ENCODE measurements at regions of chr3 and their contacts with region 1.

Region 1: DNA sequence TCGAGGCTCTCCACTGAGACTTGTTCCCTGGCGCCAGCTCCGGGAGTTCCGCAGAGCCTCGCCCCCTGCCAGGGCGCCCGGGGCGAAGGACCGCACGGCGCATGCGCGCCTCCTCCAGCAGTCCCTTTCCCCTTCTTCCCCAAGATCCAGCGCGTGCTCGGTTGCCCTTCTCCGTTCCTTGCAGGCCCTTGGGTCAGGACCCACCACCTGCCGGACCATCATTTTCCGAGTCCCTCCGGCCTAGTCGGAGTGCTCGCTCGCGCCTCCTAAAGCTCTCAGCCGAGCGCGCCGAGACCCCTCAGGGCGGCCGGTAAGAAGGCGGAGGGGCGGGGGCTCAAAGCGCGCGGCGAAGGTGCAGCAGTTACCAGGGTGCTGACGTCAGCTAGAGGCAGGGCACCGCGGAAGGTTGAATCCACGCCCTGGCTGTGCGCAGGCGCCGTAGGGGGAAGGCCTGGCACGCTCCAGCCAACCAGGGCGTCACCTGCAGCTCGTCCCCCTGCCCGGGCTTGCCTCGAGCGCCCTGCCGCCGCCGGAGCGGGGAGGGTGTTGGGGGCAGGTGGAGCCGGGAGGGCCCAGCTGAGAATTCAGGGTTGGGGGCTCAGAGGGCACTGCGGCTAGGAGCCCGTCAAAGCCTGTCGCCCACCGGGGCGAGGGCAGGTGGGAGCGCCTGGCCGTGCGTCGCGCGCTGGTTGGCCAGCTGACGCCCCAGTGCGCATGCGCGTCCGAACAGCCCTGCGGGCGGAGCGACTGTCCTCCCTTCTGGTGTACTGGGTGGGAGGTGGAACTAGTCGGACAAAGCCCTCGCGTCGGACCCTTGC is at the start of gene TCAIM:
- DNase-seq: peak; percentile 98
- H3K4me3 Mint-ChIP-seq: peak within 1 kb of the TSS; percentile 95
- H3K27ac Mint-ChIP-seq: peak within 1 kb of the TSS; percentile 92
- H3K4me1 Mint-ChIP-seq: peaks cover 24% of the 10 kb centered on the region
- H3K27me3 Mint-ChIP-seq: peaks cover 10% of the 10 kb centered on the region
- total RNA-seq, gene TCAIM: 19.3 to 19.4 TPM

Region 2: GRCh38 chr3:44439499-44440295 is 101.5 kb after region 1 on chr3:
- CTCF ChIA-PET with region 1: no interaction called
- POLR2A ChIA-PET with region 1: interaction called, 19 read pairs
- DNase-seq: peak; percentile 80
- H3K4me3 Mint-ChIP-seq: no peak overlapping the region
- H3K27ac Mint-ChIP-seq: peak overlapping the region; percentile 84
- H3K4me1 Mint-ChIP-seq: peaks cover 36% of the 10 kb centered on the region
- H3K27me3 Mint-ChIP-seq: no peaks in the 10 kb centered on the region

Region 3: DNA sequence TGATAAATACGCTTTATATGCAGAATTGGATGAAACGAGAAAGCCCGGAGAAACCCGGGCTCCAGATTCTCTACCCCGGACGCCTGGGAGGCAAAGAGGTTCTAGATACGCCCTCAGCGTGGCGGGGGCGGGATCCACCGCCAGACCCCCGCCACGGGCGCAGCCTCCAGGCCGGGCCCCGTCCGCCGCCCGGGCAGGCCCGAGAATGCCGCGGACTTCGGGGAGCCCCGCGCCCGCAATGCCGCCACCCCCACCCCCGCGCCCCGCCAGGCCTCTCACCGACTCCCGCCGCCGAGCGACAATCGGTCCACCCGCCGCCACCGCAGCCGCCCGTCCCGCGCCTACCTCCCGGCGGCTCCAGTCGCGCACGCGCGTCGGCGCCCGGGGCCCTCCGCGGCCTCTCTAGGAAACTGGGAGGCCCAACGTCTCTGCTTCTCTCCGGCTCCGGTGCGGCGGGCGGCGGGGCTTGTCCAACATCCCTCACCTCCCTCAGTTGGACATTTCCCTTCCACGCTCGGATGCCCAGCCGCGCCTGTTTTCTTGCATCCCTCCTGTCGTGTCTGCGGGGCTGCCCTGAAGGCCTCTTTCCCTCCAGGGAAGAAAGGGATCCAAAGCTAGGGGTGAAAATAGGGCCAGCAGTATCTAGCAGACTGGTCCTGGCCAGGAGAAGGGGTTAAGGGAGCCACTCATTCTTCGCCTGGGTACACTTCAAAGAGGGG is 139.3 kb after region 1 on chr3 and contains the start of gene ZNF445:
- CTCF ChIA-PET with region 1: no interaction called
- POLR2A ChIA-PET with region 1: interaction called, 19 read pairs
- DNase-seq: peak; percentile 80
- H3K4me3 Mint-ChIP-seq: peak within 1 kb of the TSS; percentile 90
- H3K27ac Mint-ChIP-seq: peak within 1 kb of the TSS; percentile 78
- H3K4me1 Mint-ChIP-seq: peaks cover 22% of the 10 kb centered on the region
- H3K27me3 Mint-ChIP-seq: no peaks in the 10 kb centered on the region
- total RNA-seq, gene ZNF445: 17.8 to 19.6 TPM

Region 4: DNA sequence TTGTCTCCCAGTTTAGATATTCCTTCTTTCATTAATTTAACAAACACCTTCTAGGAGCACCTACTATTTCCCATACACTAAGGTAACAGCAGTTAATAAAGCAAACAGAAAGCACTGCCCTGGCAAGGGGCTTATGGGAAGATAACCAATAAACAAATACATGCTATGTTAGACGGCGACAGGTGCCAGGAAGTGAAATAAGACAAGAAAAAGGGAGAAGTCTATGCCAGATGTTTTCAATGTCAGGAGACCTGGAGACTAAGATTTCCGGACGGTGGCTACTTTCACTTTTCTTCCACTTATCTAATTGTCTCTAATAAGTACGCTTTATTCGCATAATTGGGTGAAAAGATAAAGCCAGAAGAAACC is 171.8 kb after region 1 on chr3:
- CTCF ChIA-PET with region 1: interaction called, 4 read pairs
- POLR2A ChIA-PET with region 1: interaction called, 26 read pairs
- DNase-seq: no peak
- H3K4me3 Mint-ChIP-seq: peak overlapping the region; percentile 85
- H3K27ac Mint-ChIP-seq: peak overlapping the region; percentile 69
- H3K4me1 Mint-ChIP-seq: peaks cover 26% of the 10 kb centered on the region
- H3K27me3 Mint-ChIP-seq: no peaks in the 10 kb centered on the region

Region 5: GRCh38 chr3:44624749-44625480 is 286.7 kb after region 1 on chr3 and contains the start of gene ZNF197:
- CTCF ChIA-PET with region 1: interaction called, 3 read pairs
- POLR2A ChIA-PET with region 1: interaction called, 16 read pairs
- DNase-seq: peak; percentile 71
- H3K4me3 Mint-ChIP-seq: peak within 1 kb of the TSS; percentile 86
- H3K27ac Mint-ChIP-seq: peak within 1 kb of the TSS; percentile 81
- H3K4me1 Mint-ChIP-seq: peaks cover 19% of the 10 kb centered on the region
- H3K27me3 Mint-ChIP-seq: no peaks in the 10 kb centered on the region
- total RNA-seq, gene ZNF197: 13.4 to 14.0 TPM

Region 6: DNA sequence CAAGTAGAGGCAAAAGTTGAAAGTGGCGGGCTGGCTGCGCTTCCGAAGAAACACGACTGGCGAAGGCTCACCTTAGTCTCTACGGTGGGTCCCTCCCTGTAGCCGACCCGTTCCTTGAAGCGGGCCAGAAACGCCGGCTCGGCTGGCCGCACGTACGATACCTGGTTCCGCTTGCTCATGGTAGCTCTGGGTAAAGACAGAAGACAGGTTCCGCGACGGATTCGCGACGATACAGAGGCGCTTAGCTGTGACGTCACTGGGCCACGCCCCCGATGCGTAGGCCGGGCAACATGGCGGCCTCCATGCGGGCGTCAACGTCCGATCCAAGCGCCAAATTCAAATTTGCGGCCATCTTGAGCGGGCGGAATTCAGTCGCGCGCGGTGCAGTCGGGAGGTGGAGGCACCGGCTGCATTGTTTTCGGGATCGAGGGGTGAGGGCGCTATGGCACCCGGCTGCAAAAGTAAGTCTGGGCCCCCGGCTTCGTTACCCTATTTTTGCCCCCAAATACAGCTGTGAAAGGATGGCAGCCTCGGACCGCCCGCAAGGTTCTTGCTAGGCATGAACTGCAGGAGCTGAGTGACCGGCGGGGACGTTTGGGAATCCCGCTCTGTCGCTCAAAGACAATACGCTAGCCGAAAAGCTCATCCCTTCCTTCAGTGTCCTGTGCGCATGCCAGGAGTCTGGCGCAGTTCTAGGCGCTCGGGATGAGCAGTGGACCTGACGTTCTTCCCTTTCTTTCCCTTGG is 423.4 kb after region 1 on chr3 and contains the starts of genes KIAA1143 and KIF15:
- CTCF ChIA-PET with region 1: interaction called, 3 read pairs
- POLR2A ChIA-PET with region 1: interaction called, 17 read pairs
- DNase-seq: peak; percentile 98
- H3K4me3 Mint-ChIP-seq: peak within 1 kb of the TSS; percentile 90
- H3K27ac Mint-ChIP-seq: peak within 1 kb of the TSS; percentile 86
- H3K4me1 Mint-ChIP-seq: peaks cover 39% of the 10 kb centered on the region
- H3K27me3 Mint-ChIP-seq: no peaks in the 10 kb centered on the region
- total RNA-seq, gene KIAA1143: 31.3 to 35.9 TPM
- total RNA-seq, gene KIF15: 52.5 to 53.2 TPM